Right ventricle myocardium inferior (tissue), 1 donor: ENCODE measurements at regions of chr9 and their contacts with region 1.

Region 1: DNA sequence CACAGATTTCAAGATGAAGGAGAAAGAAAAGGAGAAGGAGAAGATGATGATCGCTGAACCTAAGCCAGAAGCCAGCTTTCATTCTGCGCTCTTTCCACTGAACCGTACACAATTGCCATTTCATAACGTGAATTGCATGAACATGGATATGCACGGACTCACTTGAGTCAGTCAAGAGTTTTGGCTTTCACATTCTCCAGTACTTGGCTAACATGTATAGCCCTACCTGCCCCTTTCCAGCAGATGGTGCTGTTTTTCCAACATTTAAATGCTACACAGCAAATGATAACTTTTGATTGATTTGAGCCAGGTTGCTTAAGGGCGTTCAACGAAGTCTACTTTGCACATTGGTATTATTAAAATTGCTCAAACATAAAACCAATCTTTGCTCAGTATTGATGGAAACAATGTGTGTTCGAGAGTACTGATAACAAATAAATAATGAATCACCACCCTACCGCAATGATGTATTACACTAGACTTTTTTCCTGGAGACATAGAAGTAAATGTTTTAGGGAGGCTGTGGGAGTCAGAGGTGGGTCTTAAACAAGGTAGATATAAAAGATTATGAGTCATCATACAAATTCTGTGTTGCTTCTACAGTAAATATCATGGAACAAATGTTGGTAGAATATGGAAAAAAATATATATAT is 196.4 kb downstream of the TRPM3 start:
- DNase-seq: no peak
- ATAC-seq: peak; percentile 85

Region 2: GRCh38 chr9:70539001-70539400 is 386.0 kb before region 1 on chr9:
- intact Hi-C with region 1: no loop called
- DNase-seq: no peak
- ATAC-seq: no peak

Region 3: GRCh38 chr9:71249729-71250317 is 324.8 kb after region 1 on chr9:
- intact Hi-C with region 1: loop called (anchors 10 kb)
- DNase-seq: no peak
- ATAC-seq: no peak